ENCODE measurements at regions of chr1 and their contacts with region 1.

Region 1: GRCh38 chr1:42766741-42767509 is at the starts of genes C1orf50 and P3H1:
- DNase-seq: peak; percentile 96 to 100 (median 99)
- ATAC-seq: peak; percentile 88 to 91
- H3K4me3 Mint-ChIP-seq: no peak within 1 kb of the TSS
- H3K27ac Mint-ChIP-seq: peak within 1 kb of the TSS; percentile 84 to 98 (median 95)
- H3K4me1 Mint-ChIP-seq: peaks cover 7 to 40% (median 32%) of the 10 kb centered on the region in 4 donors
- H3K27me3 Mint-ChIP-seq: no peaks in the 10 kb centered on the region
- polyA plus RNA-seq, gene C1orf50: 2.6 to 3.2 (median 3.1) TPM
- polyA plus RNA-seq, gene P3H1: 4.3 to 11.1 (median 6.9) TPM

Region 2: GRCh38 chr1:42657971-42658879 is 108.7 kb before region 1 on chr1 and contains the start of gene PPIH:
- POLR2A ChIA-PET with region 1: interaction called, 20 read pairs
- DNase-seq: peak; percentile 88 to 95 (median 92)
- ATAC-seq: peak; percentile 98
- H3K4me3 Mint-ChIP-seq: peak within 1 kb of the TSS; percentile 94 to 100 (median 98)
- H3K27ac Mint-ChIP-seq: peak within 1 kb of the TSS; percentile 92 to 98 (median 96)
- H3K4me1 Mint-ChIP-seq: peaks cover 26 to 48% (median 44%) of the 10 kb centered on the region in 4 donors
- H3K27me3 Mint-ChIP-seq: no peaks in the 10 kb centered on the region
- polyA plus RNA-seq, gene PPIH: 82.3 to 100 (median 85.0) TPM

Region 3: DNA sequence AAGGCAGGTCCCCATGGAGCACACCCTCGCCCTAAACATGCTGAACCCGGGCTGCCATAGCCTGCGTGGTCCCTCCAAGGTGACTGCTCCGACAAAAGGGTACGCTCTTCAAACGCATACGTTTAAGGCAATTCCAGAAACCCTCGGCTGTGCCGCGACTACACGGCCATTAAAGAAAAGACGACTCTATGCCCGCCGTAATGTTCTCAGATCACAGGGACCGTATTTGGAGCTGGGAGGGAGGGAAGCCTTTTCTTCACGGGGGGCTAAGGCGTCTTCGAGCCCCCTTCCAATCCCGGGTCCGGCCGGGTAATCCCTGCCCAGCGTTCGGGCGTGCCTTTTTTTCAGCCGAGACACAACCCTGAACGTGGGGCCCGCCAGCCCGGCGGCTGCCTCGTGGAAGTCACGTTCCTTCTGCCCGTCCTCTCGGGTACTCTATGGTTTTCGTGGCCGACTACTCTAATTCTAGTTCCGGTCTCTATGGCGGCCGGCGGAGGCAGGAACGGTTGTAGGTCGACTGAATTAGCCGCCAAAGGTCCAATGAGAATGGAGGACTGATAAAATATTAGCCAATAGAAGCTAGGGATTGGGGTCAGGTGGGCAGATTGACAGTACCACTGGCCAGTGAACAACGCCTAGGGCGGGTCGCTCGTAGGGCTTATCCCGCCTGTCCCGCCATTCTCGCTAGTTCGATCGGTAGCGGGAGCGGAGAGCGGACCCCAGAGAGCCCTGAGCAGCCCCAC is 85.0 kb before region 1 on chr1 and contains the start of gene YBX1:
- POLR2A ChIA-PET with region 1: interaction called, 49 read pairs
- DNase-seq: peak; percentile 85 to 98 (median 96)
- ATAC-seq: peak; percentile 89 to 92
- H3K4me3 Mint-ChIP-seq: peak within 1 kb of the TSS; percentile 94 to 99 (median 97)
- H3K27ac Mint-ChIP-seq: peak within 1 kb of the TSS; percentile 98 to 99 (median 98)
- H3K4me1 Mint-ChIP-seq: peaks cover 38 to 57% (median 56%) of the 10 kb centered on the region in 4 donors
- H3K27me3 Mint-ChIP-seq: peaks cover 0 to 1% (median 0%) of the 10 kb centered on the region in 5 donors
- polyA plus RNA-seq, gene YBX1: 80.5 to 89.2 (median 83.0) TPM

Region 4: DNA sequence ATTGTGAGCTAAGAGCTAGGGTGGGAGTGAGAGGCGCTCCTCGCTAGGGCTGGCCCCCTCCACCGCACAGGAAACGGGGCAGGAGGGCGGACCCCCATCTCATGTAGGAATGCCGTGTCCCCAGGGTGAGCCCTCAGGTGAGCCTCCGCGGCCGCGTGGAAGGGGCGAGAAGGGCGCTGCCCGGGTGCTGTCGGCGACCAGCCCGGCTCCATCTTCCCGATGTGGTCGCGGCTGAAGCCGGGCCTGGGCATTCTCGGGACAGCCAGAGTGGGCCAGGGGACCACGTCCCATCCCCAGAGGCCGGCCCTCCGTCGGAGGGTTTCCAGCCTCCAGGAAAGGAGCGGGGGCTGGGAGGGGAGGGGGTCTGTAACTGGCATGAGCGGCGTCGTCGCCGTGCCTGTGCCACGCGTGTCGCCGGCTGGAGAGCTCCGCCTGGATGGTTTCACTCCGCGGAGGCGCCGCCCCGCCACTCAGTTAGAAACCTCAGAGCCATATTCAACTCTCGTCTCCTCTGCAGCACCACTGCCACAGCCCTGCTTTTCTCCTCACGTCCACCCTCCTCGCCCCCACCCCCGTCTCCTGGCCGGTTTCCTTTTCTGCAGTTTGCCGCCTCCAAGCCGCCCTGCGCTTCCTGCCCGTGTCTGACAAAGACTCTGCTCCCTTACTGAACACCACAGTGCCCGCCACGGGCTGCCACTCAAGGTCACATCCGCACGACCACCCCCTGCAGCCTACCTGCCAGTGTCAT is 18.2 kb after region 1 on chr1 and contains the start of gene TMEM269:
- POLR2A ChIA-PET with region 1: interaction called, 12 read pairs
- DNase-seq: peak; percentile 14 to 72 (median 38)
- ATAC-seq: peak; percentile 88 to 90
- H3K4me3 Mint-ChIP-seq: peak within 1 kb of the TSS; percentile 80 to 92 (median 88)
- H3K27ac Mint-ChIP-seq: peak within 1 kb of the TSS; percentile 47 to 91 (median 84)
- H3K4me1 Mint-ChIP-seq: peaks cover 17 to 29% (median 25%) of the 10 kb centered on the region in 4 donors
- H3K27me3 Mint-ChIP-seq: no peaks in the 10 kb centered on the region
- polyA plus RNA-seq, gene TMEM269: 0.06 TPM in 1 of 3 donors, not detected in the others

Region 5: DNA sequence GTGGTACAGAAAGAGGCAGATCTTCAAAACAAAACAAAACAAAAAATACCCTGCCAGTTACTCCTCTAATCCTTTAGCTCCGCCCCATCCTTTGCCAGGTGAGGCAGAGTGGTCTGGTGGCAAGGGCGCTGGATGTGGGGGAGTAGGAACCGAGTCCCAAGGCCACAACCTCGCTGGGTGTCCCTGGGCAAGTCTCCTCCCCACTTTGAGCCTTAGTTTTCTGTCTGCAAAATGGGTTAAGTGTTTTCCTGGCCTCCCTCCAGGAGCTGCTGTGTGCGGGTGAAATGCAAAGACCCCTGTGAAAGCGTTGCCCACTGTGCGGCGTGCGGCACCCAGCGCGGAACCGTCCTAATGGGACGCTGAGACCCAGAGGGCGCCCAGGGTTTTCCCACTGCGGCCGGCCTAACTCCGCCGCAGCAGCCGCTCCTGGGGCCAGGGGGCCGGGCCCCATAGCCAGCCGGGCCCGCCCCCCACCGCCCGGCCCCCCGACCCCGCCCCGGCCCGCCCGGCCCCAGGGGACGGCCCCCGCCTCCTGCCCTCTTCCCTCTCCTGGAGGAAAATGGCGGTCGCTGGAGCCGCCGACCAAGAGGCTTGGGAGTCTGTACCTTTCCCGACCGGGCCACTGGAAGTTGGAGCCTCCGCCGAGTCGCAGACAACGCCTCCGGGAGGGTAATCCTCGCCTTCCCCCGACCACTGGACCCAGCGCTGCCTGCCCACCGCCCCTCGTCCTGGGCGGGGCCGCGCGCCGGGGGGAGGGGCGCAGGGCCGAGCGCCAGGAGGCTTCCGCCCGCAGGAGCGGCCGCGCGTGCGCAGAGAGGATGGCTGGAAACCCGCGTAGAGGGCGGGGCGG is 49.9 kb after region 1 on chr1 and contains the starts of genes ERMAP and SVBP:
- POLR2A ChIA-PET with region 1: interaction called, 38 read pairs
- DNase-seq: peak; percentile 83 to 98 (median 93)
- ATAC-seq: peak; percentile 84 to 87
- H3K4me3 Mint-ChIP-seq: peak within 1 kb of the TSS; percentile 73 to 90 (median 86)
- H3K27ac Mint-ChIP-seq: peak within 1 kb of the TSS; percentile 79 to 95 (median 88)
- H3K4me1 Mint-ChIP-seq: peaks cover 20 to 25% (median 23%) of the 10 kb centered on the region in 4 donors
- H3K27me3 Mint-ChIP-seq: no peaks in the 10 kb centered on the region
- polyA plus RNA-seq, gene ERMAP: 1.1 to 2.9 (median 2.7) TPM
- polyA plus RNA-seq, gene SVBP: 36.2 to 54.6 (median 46.0) TPM

Region 6: DNA sequence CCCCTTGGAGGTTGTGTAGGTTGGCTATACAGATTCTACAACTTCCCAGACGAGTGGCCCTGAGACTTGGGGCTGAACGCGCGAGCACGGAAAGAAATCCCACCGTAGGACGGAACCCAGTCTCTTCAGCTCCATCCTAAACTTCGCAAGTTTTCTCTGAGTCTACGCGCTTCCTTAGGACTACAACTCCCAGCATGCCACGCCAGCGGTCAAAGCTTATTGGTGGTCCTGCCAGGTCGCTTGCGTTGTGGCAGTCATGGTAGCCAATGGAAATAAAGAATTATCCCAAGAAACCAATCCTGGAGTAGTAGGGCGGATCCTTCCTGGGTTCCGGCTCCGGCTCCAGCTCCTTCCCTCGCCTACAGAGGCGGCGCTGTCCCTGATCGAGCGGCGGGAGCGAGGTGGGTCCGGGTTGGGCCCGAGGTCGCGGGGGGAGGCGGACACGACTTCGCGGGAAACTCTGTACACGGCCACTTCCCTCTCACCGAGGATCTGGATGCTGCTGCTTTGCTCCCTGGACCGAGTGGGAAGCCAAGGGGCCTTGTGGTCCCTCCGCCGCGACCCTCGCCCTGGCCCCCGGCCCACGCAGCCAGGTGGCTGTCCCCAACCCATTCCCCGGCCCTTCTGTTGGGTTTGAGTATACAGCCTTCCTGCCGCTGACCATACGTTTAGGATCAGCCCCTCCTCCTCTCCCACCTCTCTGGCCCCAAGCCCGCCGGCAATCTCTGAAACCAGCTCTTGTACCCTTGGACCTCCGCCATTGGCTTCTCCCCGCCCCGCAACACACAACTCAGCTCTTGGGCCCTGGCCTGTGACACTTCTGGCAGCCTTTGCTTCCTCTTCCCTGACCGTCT is 79.6 kb after region 1 on chr1 and contains the start of gene ZNF691:
- POLR2A ChIA-PET with region 1: interaction called, 22 read pairs
- DNase-seq: peak; percentile 70 to 95 (median 86)
- ATAC-seq: peak; percentile 98 to 99
- H3K4me3 Mint-ChIP-seq: peak within 1 kb of the TSS; percentile 86 to 100 (median 96)
- H3K27ac Mint-ChIP-seq: peak within 1 kb of the TSS; percentile 18 to 94 (median 92)
- H3K4me1 Mint-ChIP-seq: peaks cover 29 to 40% (median 33%) of the 10 kb centered on the region in 4 donors
- H3K27me3 Mint-ChIP-seq: no peaks in the 10 kb centered on the region
- polyA plus RNA-seq, gene ZNF691: 8.5 to 9.7 (median 8.8) TPM

Measured in naive thymus-derived CD8-positive, alpha-beta T cell (primary cell).